Activated B cell treated with CpG ODN at 0.5 μM for 24 hours (primary cell): ENCODE measurements at regions of chr2 and their contacts with region 1.

Region 1: DNA sequence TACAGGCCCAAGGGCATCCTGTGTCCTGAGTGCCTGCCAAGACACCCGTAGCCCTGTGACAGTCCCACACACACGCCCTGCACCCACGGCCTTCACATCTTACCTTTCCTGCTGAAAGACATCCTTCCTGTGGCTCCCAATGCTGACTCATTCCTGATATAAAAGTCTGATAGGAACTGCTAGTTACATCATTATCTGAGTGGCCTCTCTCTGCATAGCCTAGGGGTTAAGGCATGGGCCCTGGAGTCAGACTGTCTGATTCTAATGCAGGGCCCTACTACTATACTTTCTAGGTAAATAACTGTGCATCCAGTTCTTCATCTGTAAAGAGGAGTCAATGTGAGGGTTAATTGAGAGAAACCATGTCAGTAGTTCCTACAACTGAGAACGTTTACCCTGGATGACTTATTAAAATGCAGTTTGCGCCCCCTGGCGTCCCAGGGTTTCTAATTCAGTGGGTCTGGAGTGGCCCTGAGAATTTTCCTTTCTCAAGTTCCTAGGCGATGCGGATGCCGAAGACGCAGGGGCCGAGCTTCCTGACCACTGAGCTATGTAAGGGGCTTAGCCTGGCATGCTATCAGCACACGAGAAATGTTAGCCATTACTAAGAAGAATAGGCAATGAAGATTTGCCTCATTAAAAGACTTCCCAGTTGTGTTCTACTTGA is 6.0 kb upstream of the GPR45 start:
- DNase-seq: peak; percentile 50
- ATAC-seq: peak; percentile 76
- H3K4me3 Mint-ChIP-seq: no peak overlapping the region
- H3K27ac Mint-ChIP-seq: no peak overlapping the region
- H3K4me1 Mint-ChIP-seq: peaks cover 25% of the 10 kb centered on the region
- H3K27me3 Mint-ChIP-seq: no peaks in the 10 kb centered on the region
- CTCF ChIP-seq: peak; percentile 58

Region 2: DNA sequence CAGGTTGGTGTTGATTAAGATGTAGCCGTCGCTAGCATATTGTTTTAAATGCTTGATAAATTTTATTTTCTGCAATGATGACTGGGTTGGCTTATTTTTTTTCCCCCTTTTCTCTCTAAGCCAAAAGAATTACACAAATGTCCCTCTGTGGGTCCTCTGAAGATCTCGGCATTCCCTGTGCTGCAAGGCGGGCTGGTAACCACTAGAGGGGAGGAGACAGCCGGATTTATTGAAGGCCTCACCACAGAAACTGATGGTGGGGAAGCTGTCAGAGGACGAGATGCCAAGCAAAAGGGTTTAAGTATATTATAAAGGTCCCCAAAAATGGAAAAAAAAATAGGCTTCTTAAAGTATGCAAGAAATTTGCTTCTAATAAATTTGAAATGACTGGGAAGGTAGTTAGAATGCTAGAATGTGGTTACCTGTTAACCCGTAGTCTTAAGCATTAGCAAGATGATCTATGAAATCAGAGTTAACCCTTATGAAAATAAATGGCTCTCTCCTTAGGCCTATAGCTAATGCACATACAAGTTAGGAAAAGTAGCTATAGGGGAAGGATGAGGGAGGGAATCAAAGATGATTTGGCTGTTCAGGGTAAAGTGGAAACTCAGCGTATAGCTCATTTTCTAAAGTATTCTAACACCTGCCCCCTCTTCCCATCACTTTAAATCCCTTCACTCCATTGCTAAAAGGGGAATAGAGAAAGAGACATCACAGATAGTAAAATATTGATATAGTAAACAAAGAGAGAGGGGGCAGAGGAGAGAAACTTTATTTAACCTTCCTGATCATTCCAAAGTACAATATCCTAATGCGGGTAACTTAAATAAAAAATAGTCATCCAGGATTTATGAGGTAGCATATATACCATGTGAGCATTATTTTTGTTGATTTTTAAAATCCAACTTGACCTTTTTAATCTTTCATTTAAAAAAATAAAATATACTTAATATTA is 1276.1 kb before region 1 on chr2:
- CTCF ChIA-PET with region 1: no interaction called
- POLR2A ChIA-PET with region 1: no interaction called
- intact Hi-C with region 1: loop called (anchors 5 kb)
- DNase-seq: no peak
- ATAC-seq: no peak
- H3K4me3 Mint-ChIP-seq: no peak overlapping the region
- H3K27ac Mint-ChIP-seq: no peak overlapping the region
- H3K4me1 Mint-ChIP-seq: no peaks in the 10 kb centered on the region
- H3K27me3 Mint-ChIP-seq: no peaks in the 10 kb centered on the region
- CTCF ChIP-seq: peak; percentile 18

Region 3: DNA sequence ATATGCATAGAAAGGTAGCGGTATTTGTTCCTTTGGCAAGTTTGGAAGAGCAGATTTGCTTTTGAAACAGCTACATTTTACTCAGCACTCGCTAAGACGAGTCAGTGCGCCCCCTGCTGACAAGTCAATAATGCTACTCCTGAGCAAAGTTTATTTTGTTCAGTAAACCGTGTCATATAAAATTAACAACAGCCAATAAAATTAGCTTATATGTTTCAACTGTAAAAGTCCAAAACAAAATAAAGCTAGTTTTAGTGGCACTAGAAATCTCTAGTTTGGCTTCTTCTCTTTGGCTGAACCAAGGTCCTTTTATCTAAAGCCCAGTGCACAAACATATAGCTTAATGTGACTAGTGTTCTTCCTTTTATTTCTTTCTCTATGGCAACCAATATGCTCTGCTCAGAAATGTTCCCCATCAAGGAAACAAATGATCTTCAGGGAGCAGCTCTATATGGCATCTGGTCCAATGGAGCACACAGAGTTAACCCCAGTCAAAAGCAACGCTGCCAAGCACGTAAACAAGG is 385.8 kb before region 1 on chr2:
- CTCF ChIA-PET with region 1: no interaction called
- POLR2A ChIA-PET with region 1: no interaction called
- intact Hi-C with region 1: loop called (anchors 10 kb)
- DNase-seq: no peak
- ATAC-seq: no peak
- H3K4me3 Mint-ChIP-seq: no peak overlapping the region
- H3K27ac Mint-ChIP-seq: peak overlapping the region; percentile 14
- H3K4me1 Mint-ChIP-seq: peaks cover 30% of the 10 kb centered on the region
- H3K27me3 Mint-ChIP-seq: peaks cover 84% of the 10 kb centered on the region
- CTCF ChIP-seq: no peak

Region 4: DNA sequence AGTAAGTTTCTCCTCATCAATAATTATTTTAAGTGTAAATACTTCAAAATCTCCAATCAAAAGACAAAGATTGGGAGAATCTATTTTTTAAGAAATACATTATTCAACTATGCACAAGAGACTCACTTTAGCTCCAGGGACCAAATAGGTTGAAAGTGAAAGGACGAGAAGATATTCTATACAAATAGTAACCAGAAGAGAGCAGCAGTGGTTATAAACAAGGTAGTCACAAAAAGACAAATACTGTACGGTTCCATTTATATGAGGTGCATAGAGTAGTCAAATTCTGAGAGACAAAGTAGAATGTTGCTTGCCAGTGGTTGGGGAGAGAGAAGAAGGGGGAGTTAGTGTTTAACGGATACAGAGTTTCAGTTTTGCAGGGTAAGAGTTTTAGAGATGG is 311.9 kb before region 1 on chr2:
- CTCF ChIA-PET with region 1: no interaction called
- POLR2A ChIA-PET with region 1: no interaction called
- intact Hi-C with region 1: loop called (anchors 10 kb)
- DNase-seq: no peak
- ATAC-seq: no peak
- H3K4me3 Mint-ChIP-seq: no peak overlapping the region
- H3K27ac Mint-ChIP-seq: no peak overlapping the region
- H3K4me1 Mint-ChIP-seq: peaks cover 4% of the 10 kb centered on the region
- H3K27me3 Mint-ChIP-seq: no peaks in the 10 kb centered on the region
- CTCF ChIP-seq: no peak

Region 5: DNA sequence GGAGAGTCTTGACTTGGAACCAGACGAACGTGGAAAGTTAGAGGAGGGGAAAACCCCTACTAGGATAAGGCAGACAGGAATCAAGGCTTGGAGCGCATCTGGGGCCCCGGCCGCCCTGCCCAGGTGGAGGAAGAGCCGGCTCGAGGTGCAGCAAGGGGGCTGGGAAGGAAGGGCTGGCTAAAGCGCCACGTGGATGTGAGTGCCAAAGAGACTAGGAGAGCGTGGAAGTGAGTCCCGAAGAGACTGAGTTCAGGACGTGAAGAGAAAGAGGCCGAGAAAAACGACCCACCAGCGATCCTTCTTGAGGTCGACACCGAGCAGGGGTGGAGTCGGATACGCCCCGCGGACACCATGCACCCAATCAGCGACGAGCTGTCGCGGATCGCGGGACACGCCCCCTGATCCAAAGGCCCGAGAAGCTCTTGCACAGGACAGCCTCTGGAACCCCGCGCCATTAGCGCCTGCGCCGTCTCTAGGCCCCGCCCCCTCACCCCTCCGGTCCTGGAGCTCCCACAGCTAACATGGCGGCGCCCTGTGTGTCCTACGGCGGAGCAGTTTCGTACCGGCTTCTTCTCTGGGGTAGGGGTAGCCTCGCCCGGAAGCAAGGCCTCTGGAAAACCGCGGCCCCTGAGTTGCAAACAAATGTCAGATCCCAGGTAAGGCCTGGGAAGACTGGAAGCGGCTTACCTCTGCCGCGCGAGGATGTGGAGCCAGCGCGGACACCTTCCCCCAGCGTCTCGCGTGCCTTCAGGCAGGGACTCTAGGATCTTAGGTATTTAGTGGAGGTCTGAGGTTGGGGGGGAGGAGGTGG is 197.7 kb before region 1 on chr2 and contains the start of gene MRPS9:
- CTCF ChIA-PET with region 1: no interaction called
- POLR2A ChIA-PET with region 1: no interaction called
- intact Hi-C with region 1: loop called (anchors 1 kb)
- DNase-seq: peak; percentile 92
- ATAC-seq: peak; percentile 98
- H3K4me3 Mint-ChIP-seq: peak within 1 kb of the TSS; percentile 99
- H3K27ac Mint-ChIP-seq: peak within 1 kb of the TSS; percentile 95
- H3K4me1 Mint-ChIP-seq: peaks cover 36% of the 10 kb centered on the region
- H3K27me3 Mint-ChIP-seq: no peaks in the 10 kb centered on the region
- CTCF ChIP-seq: no peak
- total RNA-seq, gene MRPS9: 26.5 and 29.1 TPM in 2 replicates

Region 6: GRCh38 chr2:105114551-105114950 is 121.0 kb before region 1 on chr2:
- CTCF ChIA-PET with region 1: interaction called, 258 read pairs
- POLR2A ChIA-PET with region 1: no interaction called
- intact Hi-C with region 1: loop called (anchors 1 kb)
- DNase-seq: no peak
- ATAC-seq: no peak
- H3K4me3 Mint-ChIP-seq: no peak overlapping the region
- H3K27ac Mint-ChIP-seq: no peak overlapping the region
- H3K4me1 Mint-ChIP-seq: no peaks in the 10 kb centered on the region
- H3K27me3 Mint-ChIP-seq: no peaks in the 10 kb centered on the region
- CTCF ChIP-seq: peak; percentile 64

Region 7: GRCh38 chr2:105179469-105180372 is 55.8 kb before region 1 on chr2:
- CTCF ChIA-PET with region 1: interaction called, 4 read pairs
- POLR2A ChIA-PET with region 1: no interaction called
- intact Hi-C with region 1: loop called (anchors 10 kb)
- DNase-seq: no peak
- ATAC-seq: no peak
- H3K4me3 Mint-ChIP-seq: no peak overlapping the region
- H3K27ac Mint-ChIP-seq: no peak overlapping the region
- H3K4me1 Mint-ChIP-seq: peaks cover 69% of the 10 kb centered on the region
- H3K27me3 Mint-ChIP-seq: no peaks in the 10 kb centered on the region
- CTCF ChIP-seq: no peak

Region 8: GRCh38 chr2:105261061-105261460 is 25.5 kb after region 1 on chr2:
- CTCF ChIA-PET with region 1: no interaction called
- POLR2A ChIA-PET with region 1: no interaction called
- intact Hi-C with region 1: no loop called
- DNase-seq: no peak
- ATAC-seq: no peak
- H3K4me3 Mint-ChIP-seq: no peak overlapping the region
- H3K27ac Mint-ChIP-seq: no peak overlapping the region
- H3K4me1 Mint-ChIP-seq: no peaks in the 10 kb centered on the region
- H3K27me3 Mint-ChIP-seq: no peaks in the 10 kb centered on the region
- CTCF ChIP-seq: no peak

Region 9: DNA sequence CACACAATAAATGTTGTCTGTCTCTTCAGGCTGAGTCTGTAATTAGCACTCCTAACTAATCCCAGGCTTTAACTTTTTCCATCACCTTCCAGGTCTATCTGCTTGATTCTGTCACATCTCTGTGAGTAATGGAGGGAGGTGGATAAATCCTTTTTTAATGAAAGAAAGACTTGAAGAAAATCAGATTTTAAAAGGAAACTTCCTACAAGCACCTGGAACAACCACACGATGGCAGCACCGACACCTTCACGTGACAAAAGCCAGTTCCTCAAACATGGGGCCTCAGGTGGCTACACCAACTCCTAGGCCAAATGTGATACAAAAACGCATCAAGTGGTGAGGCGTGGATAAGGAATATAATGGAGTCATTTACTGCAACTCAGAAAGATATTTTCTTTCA is 52.2 kb after region 1 on chr2:
- CTCF ChIA-PET with region 1: no interaction called
- POLR2A ChIA-PET with region 1: no interaction called
- intact Hi-C with region 1: no loop called
- DNase-seq: no peak
- ATAC-seq: no peak
- H3K4me3 Mint-ChIP-seq: no peak overlapping the region
- H3K27ac Mint-ChIP-seq: no peak overlapping the region
- H3K4me1 Mint-ChIP-seq: no peaks in the 10 kb centered on the region
- H3K27me3 Mint-ChIP-seq: no peaks in the 10 kb centered on the region
- CTCF ChIP-seq: no peak